ENCODE measurements at regions of chr7 and their contacts with region 1.

Region 1: GRCh38 chr7:135977007-135977741 is at the start of gene MTPN:
- DNase-seq: peak; percentile 100
- ATAC-seq: peak; percentile 99 to 100
- H3K4me3 ChIP-seq: peak within 1 kb of the TSS; percentile 74
- H3K27ac ChIP-seq: peak within 1 kb of the TSS; percentile 34
- H3K4me1 ChIP-seq: no peaks in the 10 kb centered on the region
- H3K27me3 ChIP-seq: no peaks in the 10 kb centered on the region
- total RNA-seq, gene MTPN: 113 to 128 (median 123) TPM

Region 2: DNA sequence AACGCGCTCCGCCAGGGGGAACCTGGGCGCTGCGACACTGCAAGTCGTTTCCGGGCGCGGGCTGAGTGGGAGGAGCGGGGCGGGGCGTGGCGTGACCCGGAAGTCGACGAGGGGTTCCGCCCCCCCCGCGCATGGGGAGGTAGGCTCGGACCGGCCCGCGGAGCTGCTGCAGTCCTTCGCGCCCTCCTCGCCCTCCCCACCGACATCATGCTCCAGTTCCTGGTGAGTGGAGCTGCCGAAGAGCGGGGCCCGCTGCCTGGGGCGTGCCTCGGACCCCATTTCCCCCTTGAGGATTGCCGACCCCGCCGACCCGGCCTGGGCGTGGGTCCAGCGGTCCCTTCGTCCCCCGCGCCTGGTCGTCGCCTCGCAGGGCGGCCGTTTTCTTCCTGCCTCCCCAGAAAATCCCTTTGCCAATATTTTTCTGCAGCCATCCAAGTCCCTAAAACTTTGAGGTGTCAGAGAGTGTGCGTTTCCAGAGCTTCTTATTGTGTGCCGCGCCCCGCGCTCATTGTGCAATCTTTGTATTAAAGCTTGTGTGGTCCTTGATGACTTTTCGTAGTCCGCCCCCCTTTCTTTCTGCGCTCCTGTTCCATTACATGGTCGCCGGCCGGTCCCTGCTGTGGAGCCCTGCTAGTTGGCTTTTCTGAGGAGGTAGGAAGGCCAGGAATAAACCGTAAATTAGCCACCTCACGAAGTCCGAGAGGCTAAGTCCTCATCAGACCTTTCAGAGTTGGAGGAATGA is 314.6 kb before region 1 on chr7 and contains the start of gene STMP1:
- intact Hi-C with region 1: loop called in 1 of 4 experiments (anchors 10 kb)
- DNase-seq: peak; percentile 97 to 99 (median 99)
- ATAC-seq: peak; percentile 98
- H3K4me3 ChIP-seq: peak within 1 kb of the TSS; percentile 79
- H3K27ac ChIP-seq: peak within 1 kb of the TSS; percentile 96
- H3K4me1 ChIP-seq: no peaks in the 10 kb centered on the region
- H3K27me3 ChIP-seq: no peaks in the 10 kb centered on the region
- total RNA-seq, gene STMP1: 27.4 to 30.9 (median 28.7) TPM